Vagina (tissue), 2 donors: ENCODE measurements at regions of chr4 and their contacts with region 1.

Region 1: GRCh38 chr4:111788099-111788498 is 357.2 kb upstream of the FAM241A start:
- DNase-seq: no peak
- H3K4me3 ChIP-seq: no peak overlapping the region
- H3K27ac ChIP-seq: no peak overlapping the region
- H3K4me1 ChIP-seq: no peaks in the 10 kb centered on the region
- H3K27me3 ChIP-seq: no peaks in the 10 kb centered on the region
- CTCF ChIP-seq: no peak
- POLR2A ChIP-seq: no peak

Region 2: DNA sequence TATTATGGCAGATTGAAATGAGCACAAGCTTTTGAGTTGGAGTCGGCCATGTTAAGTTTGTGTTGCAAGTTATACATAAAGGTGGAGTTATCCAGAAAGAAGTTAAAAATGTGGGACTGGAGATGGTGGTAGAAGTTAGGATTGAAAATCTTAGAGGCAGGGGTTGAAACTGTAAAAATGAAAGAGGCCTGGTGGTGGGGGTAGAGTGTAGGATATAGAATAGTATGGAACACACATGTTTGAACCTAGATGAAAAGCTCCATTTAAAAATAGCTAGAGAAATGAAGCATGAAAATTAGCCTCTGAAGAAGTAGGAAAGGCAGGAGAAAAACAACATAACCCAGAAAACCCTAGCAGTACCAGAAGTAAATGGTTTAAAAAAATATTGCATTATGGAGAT is 1443.9 kb before region 1 on chr4:
- intact Hi-C with region 1: no loop called
- DNase-seq: no peak
- H3K4me3 ChIP-seq: no peak overlapping the region
- H3K27ac ChIP-seq: no peak overlapping the region
- H3K4me1 ChIP-seq: no peaks in the 10 kb centered on the region
- H3K27me3 ChIP-seq: no peaks in the 10 kb centered on the region
- CTCF ChIP-seq: peak in 1 of 3 experiments; percentile 24
- POLR2A ChIP-seq: no peak

Region 3: GRCh38 chr4:111475001-111475400 is 313.1 kb before region 1 on chr4:
- intact Hi-C with region 1: no loop called
- DNase-seq: no peak
- H3K4me3 ChIP-seq: no peak overlapping the region
- H3K27ac ChIP-seq: no peak overlapping the region
- H3K4me1 ChIP-seq: no peaks in the 10 kb centered on the region
- H3K27me3 ChIP-seq: no peaks in the 10 kb centered on the region
- CTCF ChIP-seq: no peak
- POLR2A ChIP-seq: no peak

Region 4: GRCh38 chr4:111530446-111530845 is 257.7 kb before region 1 on chr4:
- intact Hi-C with region 1: loop called (anchors 5 kb)
- DNase-seq: no peak
- H3K4me3 ChIP-seq: no peak overlapping the region
- H3K27ac ChIP-seq: no peak overlapping the region
- H3K4me1 ChIP-seq: no peaks in the 10 kb centered on the region
- H3K27me3 ChIP-seq: no peaks in the 10 kb centered on the region
- CTCF ChIP-seq: no peak
- POLR2A ChIP-seq: no peak

Region 5: DNA sequence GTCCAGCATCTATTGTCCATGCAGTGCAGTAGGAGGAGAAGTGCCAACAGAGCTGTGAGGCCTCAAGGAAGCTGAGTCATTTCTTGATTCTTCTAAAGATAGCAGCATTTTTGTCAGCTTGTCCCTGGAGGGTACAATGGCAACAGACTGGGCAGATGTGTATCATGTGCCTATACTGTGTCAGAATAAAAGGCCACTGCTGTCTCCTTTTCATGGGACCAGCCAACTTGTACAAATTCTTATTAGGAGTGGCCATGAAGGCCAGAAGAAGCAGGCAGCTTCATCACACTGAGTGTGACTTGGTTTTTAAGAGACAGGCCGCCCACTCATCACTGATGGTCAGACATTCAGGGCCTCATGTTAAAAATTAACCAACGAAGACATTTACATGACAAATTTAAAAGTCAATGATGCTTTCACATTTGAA is 172.2 kb after region 1 on chr4:
- intact Hi-C with region 1: no loop called
- DNase-seq: no peak
- H3K4me3 ChIP-seq: no peak overlapping the region
- H3K27ac ChIP-seq: no peak overlapping the region
- H3K4me1 ChIP-seq: no peaks in the 10 kb centered on the region
- H3K27me3 ChIP-seq: no peaks in the 10 kb centered on the region
- CTCF ChIP-seq: no peak
- POLR2A ChIP-seq: no peak

Region 6: GRCh38 chr4:111977419-111977965 is 189.4 kb after region 1 on chr4:
- intact Hi-C with region 1: no loop called
- DNase-seq: no peak
- H3K4me3 ChIP-seq: no peak overlapping the region
- H3K27ac ChIP-seq: no peak overlapping the region
- H3K4me1 ChIP-seq: no peaks in the 10 kb centered on the region
- H3K27me3 ChIP-seq: no peaks in the 10 kb centered on the region
- CTCF ChIP-seq: no peak
- POLR2A ChIP-seq: no peak